ENCODE measurements at regions of chr10 and their contacts with region 1.

Region 1: GRCh38 chr10:6275022-6275997 is 72.6 kb downstream of the PFKFB3 start:
- DNase-seq: peak; percentile 71
- ATAC-seq: peak; percentile 84
- H3K4me3 ChIP-seq: peak overlapping the region in 4 of 5 experiments; percentile 32 to 54 (median 37)
- H3K4me3 Mint-ChIP-seq: peak overlapping the region; percentile 86
- H3K27ac ChIP-seq: peak overlapping the region in 1 of 2 donors; percentile 54
- H3K27ac Mint-ChIP-seq: peak overlapping the region; percentile 90
- H3K4me1 ChIP-seq: peaks cover 4 to 22% of the 10 kb centered on the region in 2 donors
- H3K4me1 Mint-ChIP-seq: peaks cover 28% of the 10 kb centered on the region
- H3K27me3 ChIP-seq: peaks cover 0 to 5% (median 0%) of the 10 kb centered on the region in 4 experiments
- H3K27me3 Mint-ChIP-seq: no peaks in the 10 kb centered on the region
- CTCF ChIP-seq: no peak

Region 2: GRCh38 chr10:6382081-6382480 is 106.8 kb after region 1 on chr10:
- CTCF ChIA-PET with region 1: no interaction called
- POLR2A ChIA-PET with region 1: no interaction called
- intact Hi-C with region 1: loop called (anchors 10 kb)
- DNase-seq: peak; percentile 69
- ATAC-seq: peak; percentile 95
- H3K4me3 ChIP-seq: peak overlapping the region in 2 of 5 experiments; percentile 6 to 24
- H3K4me3 Mint-ChIP-seq: peak overlapping the region; percentile 86
- H3K27ac ChIP-seq: no peak overlapping the region
- H3K27ac Mint-ChIP-seq: peak overlapping the region; percentile 83
- H3K4me1 ChIP-seq: peaks cover 16 to 21% of the 10 kb centered on the region in 2 donors
- H3K4me1 Mint-ChIP-seq: peaks cover 34% of the 10 kb centered on the region
- H3K27me3 ChIP-seq: no peaks in the 10 kb centered on the region
- H3K27me3 Mint-ChIP-seq: no peaks in the 10 kb centered on the region
- CTCF ChIP-seq: no peak